Right ventricle myocardium inferior (tissue), 1 donor: ENCODE measurements at regions of chr9 and their contacts with region 1.

Region 1: DNA sequence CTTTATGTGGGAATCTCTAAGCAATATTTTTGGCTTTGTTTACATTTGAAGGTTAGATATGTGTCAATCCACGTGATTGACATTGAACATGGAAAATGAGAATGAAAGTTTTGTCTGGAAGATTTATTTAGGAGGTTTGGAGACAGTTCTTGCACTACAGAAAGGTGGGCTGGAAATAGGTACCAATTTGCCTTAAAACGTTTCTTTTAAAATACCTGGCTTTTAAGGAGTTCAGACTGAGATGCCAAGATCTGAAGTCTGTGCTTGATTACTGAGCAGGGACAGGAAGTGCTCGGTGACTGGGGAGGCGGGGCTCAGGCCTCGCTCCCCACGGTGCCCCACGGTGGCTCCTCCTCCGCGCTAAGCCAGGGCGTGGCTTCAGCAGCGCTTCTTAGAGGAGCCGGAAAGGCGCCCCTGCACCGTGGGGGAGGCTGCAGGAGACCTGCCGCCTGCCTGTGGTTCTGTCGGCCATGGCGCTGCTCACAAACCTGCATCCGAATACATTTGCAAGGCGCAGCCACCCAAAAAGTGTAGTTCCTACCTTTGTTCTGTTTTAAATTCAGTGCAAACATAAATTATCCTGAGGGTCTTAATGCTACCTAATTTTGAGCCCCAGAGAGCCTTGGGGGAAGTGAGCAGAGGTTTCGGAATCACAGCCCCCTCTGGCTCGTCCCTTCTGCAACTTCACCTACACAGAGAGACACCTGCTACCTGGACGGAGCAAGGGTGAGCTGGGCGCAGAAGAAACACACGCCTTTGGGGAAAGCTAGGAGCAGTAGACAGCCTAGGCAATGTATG is 49.2 kb downstream of the USP20 start:
- DNase-seq: peak; percentile 96
- ATAC-seq: peak; percentile 76

Region 2: DNA sequence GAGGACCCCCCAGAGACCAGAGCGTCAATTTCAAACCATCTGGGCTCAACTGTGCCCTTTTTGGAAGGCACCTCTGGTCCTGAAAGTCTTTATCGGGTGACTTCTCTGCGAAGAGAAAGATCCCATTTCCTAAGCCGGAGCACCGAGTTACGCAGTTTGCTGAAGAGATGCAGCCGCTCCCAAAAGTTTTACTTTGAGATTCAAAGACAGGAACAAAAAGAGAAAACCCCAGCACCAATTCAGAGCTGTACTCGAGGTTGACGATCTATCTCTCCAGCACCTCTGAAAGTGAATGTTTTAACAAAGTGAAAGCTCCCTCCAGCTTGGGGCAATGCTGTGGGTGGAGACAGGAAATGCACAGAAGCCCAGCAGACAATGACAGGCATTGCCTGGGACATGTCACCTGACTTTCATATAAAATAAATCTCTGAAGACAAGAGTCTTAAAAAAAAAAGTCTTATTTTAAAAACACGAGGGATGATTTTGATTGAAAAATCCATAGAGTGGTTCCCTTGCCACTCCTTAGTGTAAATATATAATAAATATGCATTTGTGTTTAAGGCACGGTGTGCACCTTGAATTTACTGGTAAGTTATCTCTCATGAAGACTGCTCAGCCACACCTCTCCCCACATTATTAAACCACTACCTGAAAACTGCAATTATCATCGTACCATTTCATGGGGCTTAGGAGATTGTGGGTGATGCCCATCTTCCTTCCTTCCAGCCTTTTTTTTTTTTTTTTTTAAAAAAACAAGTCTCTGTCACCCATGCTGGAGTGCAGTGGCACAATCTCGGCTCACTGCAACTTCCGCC is 78.7 kb after region 1 on chr9:
- intact Hi-C with region 1: loop called (anchors 5 kb)
- DNase-seq: no peak
- ATAC-seq: peak; percentile 70

Region 3: GRCh38 chr9:130053504-130054324 is 169.3 kb after region 1 on chr9 and contains the start of gene GPR107:
- intact Hi-C with region 1: loop called (anchors 1 kb)
- DNase-seq: peak; percentile 92
- ATAC-seq: peak; percentile 98
- total RNA-seq, gene GPR107: 21.8 TPM

Region 4: GRCh38 chr9:130235897-130236668 is 351.7 kb after region 1 on chr9:
- intact Hi-C with region 1: loop called (anchors 5 kb)
- DNase-seq: peak; percentile 89
- ATAC-seq: peak; percentile 42

Region 5: DNA sequence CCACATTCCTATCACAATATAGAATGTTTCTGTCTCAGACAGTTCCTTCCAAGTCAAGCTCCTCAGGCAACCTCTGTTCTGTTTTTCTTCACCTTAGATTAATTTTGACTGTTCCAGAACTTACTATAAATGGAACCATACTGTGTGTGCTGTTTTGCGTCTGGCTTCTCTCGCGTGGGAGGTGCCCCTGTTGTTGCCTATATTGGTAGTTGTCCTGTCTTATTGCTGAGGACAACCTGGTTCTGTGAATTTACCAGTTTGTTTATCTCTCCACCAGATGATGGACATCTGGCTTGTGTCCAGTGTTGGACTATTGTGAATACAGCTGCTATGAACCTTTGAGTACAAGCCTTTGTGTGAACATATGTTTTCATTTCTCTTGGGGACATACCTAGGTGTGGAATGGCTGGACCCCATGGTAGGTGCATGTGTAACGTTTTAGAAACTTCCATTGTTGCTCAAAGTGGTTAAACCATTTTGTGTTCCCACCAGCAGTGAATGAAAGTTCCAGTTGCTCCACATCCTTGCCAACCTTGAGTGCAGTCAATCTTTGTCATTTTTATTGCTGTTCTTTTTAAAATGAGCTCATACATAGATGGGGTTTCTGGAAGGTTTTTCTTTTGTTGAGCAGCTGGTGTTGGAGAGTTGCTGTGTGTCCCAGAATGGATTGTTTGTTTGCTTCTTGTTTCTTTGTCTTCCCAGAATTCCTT is 399.3 kb after region 1 on chr9:
- intact Hi-C with region 1: no loop called
- DNase-seq: no peak
- ATAC-seq: no peak